T-cell (primary cell): ENCODE measurements at regions of chr7 and their contacts with region 1.

Region 1: DNA sequence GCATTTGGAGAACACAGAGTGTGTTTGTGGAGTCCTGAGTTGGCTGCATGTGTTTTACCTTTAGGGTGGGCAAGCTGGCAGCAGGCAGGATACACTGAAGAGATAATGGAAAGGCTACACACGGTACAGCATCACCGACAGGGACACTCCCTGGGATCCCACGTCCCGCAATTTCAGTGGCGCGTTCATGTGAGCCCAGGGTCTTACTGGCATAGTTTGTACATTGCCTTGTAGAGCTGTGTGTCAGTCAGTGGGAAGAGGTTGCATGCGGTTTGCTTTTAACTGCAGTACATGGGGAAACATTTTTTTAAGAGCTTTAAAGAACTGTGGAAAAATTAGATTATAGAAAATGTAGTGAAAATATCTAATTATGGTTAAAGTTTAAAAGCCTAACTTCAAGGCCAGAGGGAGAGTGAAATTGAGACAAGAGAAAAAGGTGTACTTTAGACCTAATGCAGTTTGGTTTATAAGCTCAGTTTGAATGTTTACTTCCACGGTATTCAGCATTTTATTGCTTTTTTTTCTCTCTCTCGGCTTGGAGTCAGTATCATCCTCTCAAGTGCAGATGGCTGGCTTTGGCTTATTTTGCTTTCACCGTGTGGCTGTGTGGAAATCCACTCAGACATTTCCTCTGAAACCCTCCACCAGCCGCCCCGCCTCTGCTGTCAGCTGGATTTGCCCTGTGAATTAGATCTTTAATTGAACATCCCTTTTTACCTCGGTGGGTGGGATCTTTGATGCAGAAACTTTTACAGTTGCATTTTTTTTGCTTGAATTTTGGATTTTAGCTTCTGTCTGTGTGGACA is 364.2 kb upstream of the COBL start:
- DNase-seq: no peak
- ATAC-seq: no peak
- H3K4me3 ChIP-seq: no peak overlapping the region
- H3K4me3 Mint-ChIP-seq: no peak overlapping the region
- H3K27ac ChIP-seq: no peak overlapping the region
- H3K27ac Mint-ChIP-seq: no peak overlapping the region
- H3K4me1 ChIP-seq: no peaks in the 10 kb centered on the region
- H3K4me1 Mint-ChIP-seq: no peaks in the 10 kb centered on the region
- H3K27me3 ChIP-seq: no peaks in the 10 kb centered on the region
- H3K27me3 Mint-ChIP-seq: no peaks in the 10 kb centered on the region

Region 2: DNA sequence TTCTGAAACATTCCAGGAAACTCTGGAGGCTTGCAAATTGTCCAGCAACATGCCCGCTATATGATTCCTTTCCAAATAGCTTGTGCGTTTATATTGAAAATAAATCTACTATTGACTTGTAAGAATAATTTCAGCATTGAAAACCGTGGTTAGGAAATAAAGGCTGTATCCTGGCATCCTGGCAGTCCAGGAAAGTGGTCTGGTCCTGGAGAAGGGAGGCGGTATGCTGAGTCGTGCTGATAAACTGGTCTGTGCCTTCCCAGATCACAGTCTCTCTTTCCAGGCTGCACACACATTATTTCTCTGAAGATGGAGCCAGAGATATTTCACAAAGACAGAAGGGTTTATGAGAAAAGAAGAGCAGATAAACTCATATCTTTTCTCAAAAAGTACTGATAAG is 14.0 kb before region 1 on chr7:
- CTCF ChIA-PET with region 1: no interaction called
- POLR2A ChIA-PET with region 1: no interaction called
- DNase-seq: no peak
- ATAC-seq: no peak
- H3K4me3 ChIP-seq: no peak overlapping the region
- H3K4me3 Mint-ChIP-seq: no peak overlapping the region
- H3K27ac ChIP-seq: no peak overlapping the region
- H3K27ac Mint-ChIP-seq: no peak overlapping the region
- H3K4me1 ChIP-seq: no peaks in the 10 kb centered on the region
- H3K4me1 Mint-ChIP-seq: no peaks in the 10 kb centered on the region
- H3K27me3 ChIP-seq: no peaks in the 10 kb centered on the region
- H3K27me3 Mint-ChIP-seq: no peaks in the 10 kb centered on the region

Region 3: GRCh38 chr7:52639981-52640380 is 959.2 kb after region 1 on chr7:
- CTCF ChIA-PET with region 1: interaction called in 1 of 2 experiments, 10 read pairs
- POLR2A ChIA-PET with region 1: no interaction called
- DNase-seq: no peak
- ATAC-seq: no peak
- H3K4me3 ChIP-seq: no peak overlapping the region
- H3K4me3 Mint-ChIP-seq: no peak overlapping the region
- H3K27ac ChIP-seq: no peak overlapping the region
- H3K27ac Mint-ChIP-seq: no peak overlapping the region
- H3K4me1 ChIP-seq: no peaks in the 10 kb centered on the region
- H3K4me1 Mint-ChIP-seq: no peaks in the 10 kb centered on the region
- H3K27me3 ChIP-seq: no peaks in the 10 kb centered on the region
- H3K27me3 Mint-ChIP-seq: no peaks in the 10 kb centered on the region